ENCODE measurements at regions of chr11 and their contacts with region 1.

Region 1: GRCh38 chr11:47176328-47177228 is at the start of gene ARFGAP2:
- DNase-seq: peak; percentile 73
- ATAC-seq: peak; percentile 97
- H3K4me3 ChIP-seq: peak within 1 kb of the TSS; percentile 93
- H3K27ac ChIP-seq: peak within 1 kb of the TSS; percentile 90
- H3K4me1 ChIP-seq: peaks cover 14% of the 10 kb centered on the region
- H3K27me3 ChIP-seq: no peaks in the 10 kb centered on the region
- CTCF ChIP-seq: no peak
- EP300 ChIP-seq: 0 out of 4 replicates have a peak, but pooled peaks of 1 of the 2 experiments have one; percentile 4
- POLR2A ChIP-seq: peak; percentile 50
- RAD21 ChIP-seq: no peak
- polyA plus RNA-seq, gene ARFGAP2: 20.9 to 25.0 TPM

Region 2: GRCh38 chr11:47130543-47130942 is 46.0 kb before region 1 on chr11:
- CTCF ChIA-PET with region 1: no interaction called
- POLR2A ChIA-PET with region 1: no interaction called
- RAD21 ChIA-PET with region 1: no interaction called
- SMC1A ChIA-PET with region 1: no interaction called
- in situ Hi-C with region 1: no loop called
- intact Hi-C with region 1: no loop called
- DNase-seq: no peak
- ATAC-seq: no peak
- H3K4me3 ChIP-seq: no peak overlapping the region
- H3K27ac ChIP-seq: no peak overlapping the region
- H3K4me1 ChIP-seq: peaks cover 7% of the 10 kb centered on the region; the same call in 1 of the 2 replicates
- H3K27me3 ChIP-seq: no peaks in the 10 kb centered on the region
- CTCF ChIP-seq: no peak
- EP300 ChIP-seq: no peak
- POLR2A ChIP-seq: no peak
- RAD21 ChIP-seq: no peak

Region 3: GRCh38 chr11:47213985-47214564 is 37.5 kb after region 1 on chr11:
- CTCF ChIA-PET with region 1: interaction called, 36 read pairs
- POLR2A ChIA-PET with region 1: interaction called, 6 read pairs
- RAD21 ChIA-PET with region 1: interaction called, 5 read pairs
- SMC1A ChIA-PET with region 1: interaction called, 5 read pairs
- in situ Hi-C with region 1: no loop called
- intact Hi-C with region 1: loop called (anchors 2 kb)
- DNase-seq: peak; percentile 49
- ATAC-seq: peak; percentile 88
- H3K4me3 ChIP-seq: peak overlapping the region; percentile 92
- H3K27ac ChIP-seq: peak overlapping the region; percentile 55
- H3K4me1 ChIP-seq: peaks cover 9% of the 10 kb centered on the region
- H3K27me3 ChIP-seq: no peaks in the 10 kb centered on the region
- CTCF ChIP-seq: no peak
- EP300 ChIP-seq: no peak
- POLR2A ChIP-seq: no peak
- RAD21 ChIP-seq: no peak

Region 4: GRCh38 chr11:47259178-47259977 is 82.8 kb after region 1 on chr11:
- CTCF ChIA-PET with region 1: interaction called, 88 read pairs
- POLR2A ChIA-PET with region 1: interaction called, 3 read pairs
- RAD21 ChIA-PET with region 1: interaction called, 29 read pairs
- SMC1A ChIA-PET with region 1: interaction called, 35 read pairs
- in situ Hi-C with region 1: no loop called
- intact Hi-C with region 1: loop called (anchors 1 kb)
- DNase-seq: no peak
- ATAC-seq: peak; percentile 94
- H3K4me3 ChIP-seq: no peak overlapping the region
- H3K27ac ChIP-seq: no peak overlapping the region
- H3K4me1 ChIP-seq: no peaks in the 10 kb centered on the region
- H3K27me3 ChIP-seq: no peaks in the 10 kb centered on the region
- CTCF ChIP-seq: peak; percentile 68 to 81 (median 76)
- EP300 ChIP-seq: no peak
- POLR2A ChIP-seq: no peak
- RAD21 ChIP-seq: peak; percentile 75

Region 5: DNA sequence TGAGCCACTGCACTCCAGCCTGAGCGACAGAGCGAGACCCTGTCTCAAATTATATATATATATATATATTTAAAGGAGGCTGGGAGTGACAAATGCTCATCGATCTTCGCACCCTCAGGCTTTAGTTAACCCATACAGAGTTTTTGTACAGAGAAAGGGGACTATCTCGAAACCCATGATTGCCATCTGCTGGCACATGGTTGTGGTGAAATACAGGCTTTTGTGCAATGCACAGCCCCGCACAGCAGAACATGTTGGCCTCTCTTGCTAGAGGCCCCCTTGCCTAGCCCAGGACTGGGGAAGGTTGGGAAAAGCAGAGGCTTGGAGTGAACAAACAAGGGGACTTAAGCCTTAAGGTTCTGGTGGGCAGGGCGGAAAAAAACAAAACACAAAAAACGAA is 172.3 kb after region 1 on chr11:
- CTCF ChIA-PET with region 1: interaction called, 3 read pairs
- POLR2A ChIA-PET with region 1: no interaction called
- RAD21 ChIA-PET with region 1: no interaction called
- SMC1A ChIA-PET with region 1: interaction called, 4 read pairs
- in situ Hi-C with region 1: no loop called
- intact Hi-C with region 1: loop called (anchors 5 kb)
- DNase-seq: no peak
- ATAC-seq: peak; percentile 66
- H3K4me3 ChIP-seq: no peak overlapping the region
- H3K27ac ChIP-seq: no peak overlapping the region
- H3K4me1 ChIP-seq: no peaks in the 10 kb centered on the region
- H3K27me3 ChIP-seq: no peaks in the 10 kb centered on the region; a peak in 1 of 4 replicates
- CTCF ChIP-seq: peak; percentile 25 to 36 (median 30); a peak in 3 of 6 replicates
- EP300 ChIP-seq: no peak
- POLR2A ChIP-seq: no peak
- RAD21 ChIP-seq: peak; percentile 55

Region 6: DNA sequence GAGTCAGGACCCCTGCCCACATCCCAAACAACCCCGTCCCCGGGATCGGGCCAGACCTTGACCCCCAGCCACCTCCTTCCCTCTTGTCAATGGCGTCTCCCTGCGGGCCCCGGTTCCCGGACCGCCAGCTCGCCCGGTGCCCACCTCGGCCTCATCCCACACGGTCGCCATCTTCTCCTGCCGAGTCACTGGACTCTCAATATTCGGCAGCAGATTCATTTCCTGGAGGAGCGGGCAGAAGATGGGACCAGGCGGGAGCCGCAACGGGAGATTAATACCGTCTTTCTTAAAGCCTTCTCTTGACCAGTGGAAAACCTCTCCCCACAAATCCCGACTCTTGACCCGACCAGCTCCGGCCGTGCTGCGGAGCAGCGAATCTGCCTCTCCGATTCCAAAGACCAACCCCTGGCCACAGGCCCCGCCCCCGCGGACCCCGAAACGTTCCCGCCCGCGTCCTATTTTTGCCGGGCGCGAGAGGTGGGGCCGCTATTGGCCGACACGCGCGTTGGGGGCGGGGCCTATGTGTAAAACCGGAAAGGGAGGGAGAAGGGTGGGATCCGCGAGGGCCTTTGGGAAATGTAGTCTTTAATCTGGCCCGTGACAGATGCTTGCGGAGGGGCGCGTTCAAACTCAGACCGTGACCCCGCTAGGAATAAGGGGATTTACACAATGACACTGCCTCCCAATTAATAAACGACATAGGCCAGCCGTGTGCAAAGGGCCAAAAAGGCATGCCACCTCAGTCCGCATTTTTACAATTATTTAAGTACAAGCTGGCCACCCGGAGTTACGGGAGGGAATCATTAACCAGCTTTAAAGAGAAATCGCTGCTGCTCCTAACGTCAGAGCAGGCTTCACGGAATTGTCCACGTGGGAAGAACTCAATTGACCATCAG is 249.7 kb after region 1 on chr11 and contains the start of gene PSMC3:
- CTCF ChIA-PET with region 1: no interaction called
- POLR2A ChIA-PET with region 1: no interaction called
- RAD21 ChIA-PET with region 1: no interaction called
- SMC1A ChIA-PET with region 1: no interaction called
- in situ Hi-C with region 1: loop called (anchors 5 kb)
- intact Hi-C with region 1: loop called (anchors 5 kb)
- DNase-seq: peak; percentile 71
- ATAC-seq: peak; percentile 95
- H3K4me3 ChIP-seq: peak within 1 kb of the TSS; percentile 97
- H3K27ac ChIP-seq: peak within 1 kb of the TSS; percentile 99
- H3K4me1 ChIP-seq: peaks cover 12% of the 10 kb centered on the region
- H3K27me3 ChIP-seq: no peaks in the 10 kb centered on the region
- CTCF ChIP-seq: no peak
- EP300 ChIP-seq: peak in 1 of 2 experiments; percentile 99; a peak in 2 of 4 replicates
- POLR2A ChIP-seq: peak; percentile 93
- RAD21 ChIP-seq: no peak
- polyA plus RNA-seq, gene PSMC3: 39.5 to 54.3 TPM

Region 7: GRCh38 chr11:47847892-47848635 is 671.5 kb after region 1 on chr11 and contains the start of gene NUP160:
- CTCF ChIA-PET with region 1: no interaction called
- POLR2A ChIA-PET with region 1: no interaction called
- RAD21 ChIA-PET with region 1: interaction called, 3 read pairs
- SMC1A ChIA-PET with region 1: no interaction called
- in situ Hi-C with region 1: no loop called
- intact Hi-C with region 1: loop called (anchors 10 kb)
- DNase-seq: no peak
- ATAC-seq: peak; percentile 90
- H3K4me3 ChIP-seq: peak within 1 kb of the TSS; percentile 98
- H3K27ac ChIP-seq: peak within 1 kb of the TSS; percentile 84
- H3K4me1 ChIP-seq: peaks cover 33% of the 10 kb centered on the region
- H3K27me3 ChIP-seq: no peaks in the 10 kb centered on the region
- CTCF ChIP-seq: no peak
- EP300 ChIP-seq: 0 out of 4 replicates have a peak, but pooled peaks of 1 of the 2 experiments have one; percentile 29
- POLR2A ChIP-seq: peak; percentile 100
- RAD21 ChIP-seq: no peak
- polyA plus RNA-seq, gene NUP160: 24.0 to 32.9 TPM

Measured in GM12878 (cell line).